Activated CD4-positive, alpha-beta memory T cell treated with anti-CD3 and anti-CD28 coated beads for 36 hours (primary cell): ENCODE measurements at regions of chr2 and their contacts with region 1.

Region 1: GRCh38 chr2:44342854-44343253 is 18.4 kb downstream of the PREPL start:
- DNase-seq: no peak
- H3K4me3 Mint-ChIP-seq: no peak overlapping the region
- H3K27ac Mint-ChIP-seq: no peak overlapping the region
- H3K4me1 Mint-ChIP-seq: no peaks in the 10 kb centered on the region
- H3K27me3 Mint-ChIP-seq: no peaks in the 10 kb centered on the region

Region 2: GRCh38 chr2:44201648-44202165 is 141.1 kb before region 1 on chr2:
- CTCF ChIA-PET with region 1: no interaction called
- POLR2A ChIA-PET with region 1: no interaction called
- intact Hi-C with region 1: no loop called
- DNase-seq: no peak
- H3K4me3 Mint-ChIP-seq: no peak overlapping the region
- H3K27ac Mint-ChIP-seq: no peak overlapping the region
- H3K4me1 Mint-ChIP-seq: peaks cover 57% of the 10 kb centered on the region
- H3K27me3 Mint-ChIP-seq: no peaks in the 10 kb centered on the region

Region 3: GRCh38 chr2:44244129-44244871 is 98.6 kb before region 1 on chr2:
- CTCF ChIA-PET with region 1: interaction called, 10 read pairs
- POLR2A ChIA-PET with region 1: no interaction called
- intact Hi-C with region 1: loop called (anchors 2 kb)
- DNase-seq: peak; percentile 64
- H3K4me3 Mint-ChIP-seq: peak overlapping the region; percentile 66
- H3K27ac Mint-ChIP-seq: no peak overlapping the region
- H3K4me1 Mint-ChIP-seq: peaks cover 12% of the 10 kb centered on the region
- H3K27me3 Mint-ChIP-seq: no peaks in the 10 kb centered on the region

Region 4: GRCh38 chr2:44528595-44528994 is 185.7 kb after region 1 on chr2:
- CTCF ChIA-PET with region 1: no interaction called
- POLR2A ChIA-PET with region 1: no interaction called
- intact Hi-C with region 1: no loop called
- DNase-seq: no peak
- H3K4me3 Mint-ChIP-seq: no peak overlapping the region
- H3K27ac Mint-ChIP-seq: no peak overlapping the region
- H3K4me1 Mint-ChIP-seq: no peaks in the 10 kb centered on the region
- H3K27me3 Mint-ChIP-seq: no peaks in the 10 kb centered on the region